A673 (cell line): ENCODE measurements at regions of chr22 and their contacts with region 1.

Region 1: GRCh38 chr22:41842996-41843970 is 10.4 kb downstream of the SREBF2 start:
- DNase-seq: no peak
- H3K4me3 ChIP-seq: no peak overlapping the region
- H3K27ac ChIP-seq: no peak overlapping the region
- H3K4me1 ChIP-seq: peaks cover 35% of the 10 kb centered on the region
- H3K27me3 ChIP-seq: no peaks in the 10 kb centered on the region
- CTCF ChIP-seq: no peak

Region 2: DNA sequence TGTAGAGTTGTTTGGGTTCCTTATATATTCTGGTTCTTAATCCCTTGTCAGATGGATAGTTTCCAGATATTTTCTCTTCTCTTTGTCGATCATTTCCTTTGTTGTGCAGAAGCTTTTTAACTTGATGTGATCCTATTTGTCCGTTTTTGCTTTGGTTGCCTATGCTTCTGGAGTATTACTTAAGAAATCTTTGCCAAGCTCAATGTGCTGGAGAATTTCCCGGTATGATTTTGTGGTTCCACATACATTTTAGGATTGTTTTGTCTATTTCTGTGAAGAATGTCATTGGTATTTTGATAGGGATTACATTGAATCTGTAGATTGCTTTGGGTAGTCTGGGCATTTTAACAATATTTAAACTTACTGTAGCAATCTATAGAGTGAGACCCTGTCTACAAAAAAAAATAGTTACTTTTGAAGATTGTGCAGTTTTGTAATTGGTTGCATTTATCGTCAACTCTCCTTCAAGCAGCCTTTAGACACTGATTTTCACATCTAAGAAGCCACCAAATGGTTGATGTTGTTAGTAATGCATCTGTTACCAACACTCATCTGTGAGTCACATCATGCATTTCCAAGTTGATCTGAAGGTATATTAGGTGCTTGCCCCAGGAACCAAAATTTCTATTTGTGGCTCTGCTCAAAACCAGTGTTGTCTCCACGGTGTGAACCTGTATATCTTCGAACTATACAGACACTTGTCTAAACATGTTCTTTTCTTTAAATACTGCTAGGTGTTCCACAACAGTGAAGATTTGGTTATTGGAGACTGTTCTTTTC is 200.8 kb before region 1 on chr22:
- CTCF ChIA-PET with region 1: no interaction called
- POLR2A ChIA-PET with region 1: no interaction called
- intact Hi-C with region 1: no loop called
- DNase-seq: no peak
- H3K4me3 ChIP-seq: no peak overlapping the region
- H3K27ac ChIP-seq: no peak overlapping the region
- H3K4me1 ChIP-seq: no peaks in the 10 kb centered on the region
- H3K27me3 ChIP-seq: no peaks in the 10 kb centered on the region
- CTCF ChIP-seq: no peak

Region 3: GRCh38 chr22:41688365-41689211 is 154.7 kb before region 1 on chr22 and contains the start of gene SNU13:
- CTCF ChIA-PET with region 1: no interaction called
- POLR2A ChIA-PET with region 1: interaction called, 16 read pairs
- intact Hi-C with region 1: no loop called
- DNase-seq: peak; percentile 97
- H3K4me3 ChIP-seq: peak within 1 kb of the TSS; percentile 69
- H3K27ac ChIP-seq: peak within 1 kb of the TSS; percentile 93
- H3K4me1 ChIP-seq: peaks cover 5% of the 10 kb centered on the region
- H3K27me3 ChIP-seq: no peaks in the 10 kb centered on the region
- CTCF ChIP-seq: no peak
- total RNA-seq, gene SNU13: 216 and 223 TPM in 2 replicates

Region 4: GRCh38 chr22:41832553-41833368 is 10.5 kb before region 1 on chr22 and contains the start of gene SREBF2:
- CTCF ChIA-PET with region 1: no interaction called
- POLR2A ChIA-PET with region 1: interaction called, 10 read pairs
- intact Hi-C with region 1: no loop called
- DNase-seq: peak; percentile 100
- H3K4me3 ChIP-seq: peak within 1 kb of the TSS; percentile 76
- H3K27ac ChIP-seq: peak within 1 kb of the TSS; percentile 99
- H3K4me1 ChIP-seq: peaks cover 14% of the 10 kb centered on the region
- H3K27me3 ChIP-seq: no peaks in the 10 kb centered on the region
- CTCF ChIP-seq: no peak
- total RNA-seq, gene SREBF2: 141 and 162 TPM in 2 replicates

Region 5: DNA sequence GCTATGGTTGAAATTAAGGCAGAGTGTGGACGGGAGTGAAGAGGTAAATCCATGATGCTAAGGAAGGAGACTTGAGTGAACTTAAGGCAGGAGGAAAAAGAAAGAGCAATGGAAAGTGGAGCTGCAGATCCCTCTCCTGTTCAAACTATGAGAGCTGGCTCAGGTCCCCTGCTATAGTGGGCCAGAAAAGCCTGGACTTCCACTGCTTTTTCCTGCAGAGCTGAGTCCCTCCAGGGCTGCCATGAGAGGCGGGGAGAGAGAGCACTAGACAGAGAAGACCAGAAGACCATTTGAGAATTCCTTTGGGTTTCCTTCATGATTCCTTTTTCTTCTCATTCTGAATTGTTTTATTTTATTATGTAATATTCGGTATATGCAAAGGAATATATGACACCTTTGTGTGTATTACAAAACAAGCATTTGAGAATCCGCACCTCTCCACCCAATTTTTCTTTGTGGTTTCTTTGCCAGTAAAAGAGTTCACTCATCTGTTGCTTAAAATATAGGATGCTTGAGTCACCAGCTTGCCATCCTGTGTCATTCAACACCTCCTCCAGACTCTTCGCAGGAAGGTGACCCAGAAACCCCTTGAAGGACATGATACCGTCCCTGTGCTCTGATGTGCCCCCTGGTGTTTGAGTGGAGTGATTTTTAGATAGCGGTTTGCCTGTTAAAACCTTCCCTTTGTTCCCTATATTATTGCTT is 14.0 kb after region 1 on chr22:
- CTCF ChIA-PET with region 1: interaction called, 6 read pairs
- POLR2A ChIA-PET with region 1: interaction called, 17 read pairs
- intact Hi-C with region 1: no loop called
- DNase-seq: peak; percentile 57
- H3K4me3 ChIP-seq: no peak overlapping the region
- H3K27ac ChIP-seq: peak overlapping the region; percentile 38
- H3K4me1 ChIP-seq: peaks cover 22% of the 10 kb centered on the region
- H3K27me3 ChIP-seq: no peaks in the 10 kb centered on the region
- CTCF ChIP-seq: peak; percentile 61